Activated CD4-positive, alpha-beta memory T cell treated with anti-CD3 and anti-CD28 coated beads for 36 hours (primary cell): ENCODE measurements at regions of chr3 and their contacts with region 1.

Region 1: GRCh38 chr3:108090701-108091451 is at the start of gene CD47:
- DNase-seq: peak; percentile 97
- H3K4me3 Mint-ChIP-seq: peak within 1 kb of the TSS; percentile 93
- H3K27ac Mint-ChIP-seq: peak within 1 kb of the TSS; percentile 95
- H3K4me1 Mint-ChIP-seq: peaks cover 30% of the 10 kb centered on the region
- H3K27me3 Mint-ChIP-seq: no peaks in the 10 kb centered on the region
- total RNA-seq, gene CD47: 122 to 124 TPM

Region 2: DNA sequence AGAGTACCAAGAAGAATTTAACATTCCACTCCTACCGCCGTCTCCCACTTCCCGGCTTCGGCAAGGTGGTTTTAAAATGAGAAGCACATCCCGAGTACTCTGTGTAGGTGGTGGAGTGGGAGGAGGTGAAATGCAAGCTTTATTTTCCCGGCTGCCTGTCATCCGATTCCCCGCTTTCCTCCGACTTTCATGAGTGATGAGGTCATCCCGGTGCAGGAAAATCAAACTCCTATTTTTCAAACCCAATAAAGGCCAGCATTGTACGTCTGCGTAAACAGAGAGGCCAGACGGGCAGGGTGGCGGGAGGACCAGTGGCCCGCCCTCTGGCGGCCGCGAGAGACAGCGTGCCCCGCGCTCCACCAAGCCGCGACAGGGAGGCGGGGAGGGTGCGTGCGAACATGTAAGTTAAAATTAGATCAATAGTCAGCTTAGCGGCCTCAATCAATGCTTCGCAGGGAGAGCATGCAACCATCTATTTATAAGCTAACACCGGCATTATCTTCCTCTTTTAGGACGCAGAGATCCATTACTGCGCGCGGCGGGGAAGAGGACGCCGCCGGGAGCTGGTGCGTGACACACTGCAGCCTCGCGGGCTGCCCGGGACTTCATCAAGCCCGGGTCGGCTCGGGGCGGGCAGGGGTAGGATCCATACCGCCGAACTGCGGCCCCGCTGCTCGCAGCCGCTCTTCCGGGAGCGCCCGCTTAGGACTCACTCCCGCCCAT is 163.4 kb before region 1 on chr3:
- CTCF ChIA-PET with region 1: interaction called, 5 read pairs
- POLR2A ChIA-PET with region 1: no interaction called
- intact Hi-C with region 1: loop called (anchors 5 kb)
- DNase-seq: peak; percentile 81
- H3K4me3 Mint-ChIP-seq: peak overlapping the region; percentile 72
- H3K27ac Mint-ChIP-seq: no peak overlapping the region
- H3K4me1 Mint-ChIP-seq: peaks cover 10% of the 10 kb centered on the region
- H3K27me3 Mint-ChIP-seq: peaks cover 5% of the 10 kb centered on the region

Region 3: GRCh38 chr3:108050990-108051389 is 39.9 kb before region 1 on chr3:
- CTCF ChIA-PET with region 1: no interaction called
- POLR2A ChIA-PET with region 1: no interaction called
- intact Hi-C with region 1: no loop called
- DNase-seq: no peak
- H3K4me3 Mint-ChIP-seq: no peak overlapping the region
- H3K27ac Mint-ChIP-seq: no peak overlapping the region
- H3K4me1 Mint-ChIP-seq: peaks cover 36% of the 10 kb centered on the region
- H3K27me3 Mint-ChIP-seq: no peaks in the 10 kb centered on the region

Region 4: GRCh38 chr3:108062051-108062450 is 28.8 kb before region 1 on chr3:
- CTCF ChIA-PET with region 1: no interaction called
- POLR2A ChIA-PET with region 1: no interaction called
- intact Hi-C with region 1: no loop called
- DNase-seq: no peak
- H3K4me3 Mint-ChIP-seq: no peak overlapping the region
- H3K27ac Mint-ChIP-seq: no peak overlapping the region
- H3K4me1 Mint-ChIP-seq: peaks cover 64% of the 10 kb centered on the region
- H3K27me3 Mint-ChIP-seq: no peaks in the 10 kb centered on the region

Region 5: GRCh38 chr3:108073764-108074431 is 17.0 kb before region 1 on chr3:
- CTCF ChIA-PET with region 1: interaction called, 10 read pairs
- POLR2A ChIA-PET with region 1: interaction called, 13 read pairs
- intact Hi-C with region 1: loop called (anchors 2 kb)
- DNase-seq: no peak
- H3K4me3 Mint-ChIP-seq: no peak overlapping the region
- H3K27ac Mint-ChIP-seq: peak overlapping the region; percentile 50
- H3K4me1 Mint-ChIP-seq: peaks cover 73% of the 10 kb centered on the region
- H3K27me3 Mint-ChIP-seq: no peaks in the 10 kb centered on the region

Region 6: GRCh38 chr3:108117241-108117775 is 26.4 kb after region 1 on chr3:
- CTCF ChIA-PET with region 1: no interaction called
- POLR2A ChIA-PET with region 1: interaction called, 147 read pairs
- intact Hi-C with region 1: no loop called
- DNase-seq: no peak
- H3K4me3 Mint-ChIP-seq: no peak overlapping the region
- H3K27ac Mint-ChIP-seq: no peak overlapping the region
- H3K4me1 Mint-ChIP-seq: peaks cover 29% of the 10 kb centered on the region
- H3K27me3 Mint-ChIP-seq: no peaks in the 10 kb centered on the region

Region 7: DNA sequence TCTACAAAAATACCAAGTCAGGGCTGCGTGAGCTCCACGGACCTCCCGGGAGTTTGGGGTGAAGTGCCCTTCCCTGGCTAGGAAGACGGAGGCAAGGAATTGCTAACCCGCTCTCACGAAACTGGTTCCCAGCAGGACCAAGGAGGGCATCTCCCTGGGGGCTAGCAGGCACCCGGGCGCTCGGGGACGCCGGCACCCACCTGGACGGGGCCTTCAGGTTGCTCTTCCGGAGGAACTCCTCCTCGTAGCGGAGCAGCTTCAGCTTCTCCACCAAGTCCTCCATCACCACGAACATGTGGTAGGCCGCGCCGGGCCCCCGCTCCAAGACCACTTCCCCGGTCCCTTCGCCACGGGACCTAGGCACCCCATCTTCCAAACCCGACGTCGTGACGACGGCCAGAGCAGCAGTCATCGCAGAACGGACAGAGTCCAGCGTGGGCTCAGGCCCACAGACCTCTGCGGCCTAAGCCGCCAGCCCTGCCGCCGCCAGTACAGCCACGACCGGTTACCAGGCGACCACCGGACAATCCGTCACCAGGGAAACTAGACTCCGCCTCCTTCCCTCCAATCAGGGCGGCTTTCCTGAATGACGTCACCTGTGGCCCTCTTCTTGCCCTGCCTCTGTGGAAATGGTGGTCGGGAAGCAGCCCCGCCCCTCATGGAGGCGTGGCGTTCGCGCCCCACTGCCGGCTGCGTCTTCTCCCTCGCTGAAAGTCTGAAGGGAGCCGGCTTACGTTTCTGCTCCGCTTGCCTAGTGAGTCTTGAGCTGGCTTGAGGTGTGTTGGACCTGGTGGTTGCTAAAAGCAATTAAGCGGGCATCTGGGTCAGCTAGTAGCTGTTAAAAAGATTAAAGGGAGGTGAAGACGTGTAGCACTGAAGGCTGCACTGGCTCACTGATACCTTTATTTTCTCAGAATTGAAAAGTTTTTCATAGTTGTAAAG is 131.3 kb after region 1 on chr3 and contains the start of gene IFT57:
- CTCF ChIA-PET with region 1: no interaction called
- POLR2A ChIA-PET with region 1: interaction called, 5 read pairs
- intact Hi-C with region 1: loop called (anchors 1 kb)
- DNase-seq: peak; percentile 96
- H3K4me3 Mint-ChIP-seq: peak within 1 kb of the TSS; percentile 96
- H3K27ac Mint-ChIP-seq: peak within 1 kb of the TSS; percentile 96
- H3K4me1 Mint-ChIP-seq: peaks cover 47% of the 10 kb centered on the region
- H3K27me3 Mint-ChIP-seq: no peaks in the 10 kb centered on the region
- total RNA-seq, gene IFT57: 29.4 to 29.6 TPM

Region 8: GRCh38 chr3:108416111-108416869 is 325.4 kb after region 1 on chr3:
- CTCF ChIA-PET with region 1: no interaction called
- POLR2A ChIA-PET with region 1: no interaction called
- intact Hi-C with region 1: loop called (anchors 5 kb)
- DNase-seq: no peak
- H3K4me3 Mint-ChIP-seq: no peak overlapping the region
- H3K27ac Mint-ChIP-seq: no peak overlapping the region
- H3K4me1 Mint-ChIP-seq: peaks cover 12% of the 10 kb centered on the region
- H3K27me3 Mint-ChIP-seq: peaks cover 5% of the 10 kb centered on the region

Region 9: DNA sequence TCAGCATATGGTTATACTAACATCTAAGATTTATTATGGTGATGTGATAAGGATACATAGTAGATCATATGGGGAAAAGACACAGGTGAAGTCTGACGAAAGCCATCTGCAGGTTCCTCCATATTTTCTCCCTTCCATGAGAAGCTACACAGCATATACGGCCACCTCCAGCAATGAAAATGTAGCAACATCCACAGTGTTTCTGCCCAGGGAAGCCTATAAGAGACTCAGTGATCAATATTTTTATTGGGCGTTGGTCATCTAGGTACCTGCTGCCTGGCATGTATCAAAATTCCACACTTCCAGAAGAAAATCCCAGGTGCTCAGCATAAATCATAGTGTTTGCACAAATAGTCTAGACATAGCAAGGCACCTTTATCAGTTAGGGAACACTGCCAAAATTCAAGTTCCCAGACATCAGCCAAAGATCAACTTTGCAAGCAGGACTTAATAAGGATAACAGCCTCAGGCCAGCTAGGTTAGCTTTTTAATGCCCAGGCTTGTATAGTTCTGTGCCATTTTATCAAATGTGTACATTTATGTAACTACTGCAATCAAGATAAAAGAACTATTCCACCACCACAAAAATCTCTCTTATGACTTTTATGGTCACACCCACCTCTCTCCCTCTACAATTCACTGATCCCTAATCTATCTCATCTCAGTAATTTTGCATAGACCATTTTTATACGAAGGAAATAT is 529.3 kb after region 1 on chr3:
- CTCF ChIA-PET with region 1: no interaction called
- POLR2A ChIA-PET with region 1: no interaction called
- intact Hi-C with region 1: no loop called
- DNase-seq: no peak
- H3K4me3 Mint-ChIP-seq: no peak overlapping the region
- H3K27ac Mint-ChIP-seq: no peak overlapping the region
- H3K4me1 Mint-ChIP-seq: no peaks in the 10 kb centered on the region
- H3K27me3 Mint-ChIP-seq: no peaks in the 10 kb centered on the region